ENCODE measurements at regions of chr3 and their contacts with region 1.

Region 1: GRCh38 chr3:81760924-81761903 is at the start of gene GBE1:
- DNase-seq: peak; percentile 98
- total RNA-seq, gene GBE1: 102 TPM

Region 2: DNA sequence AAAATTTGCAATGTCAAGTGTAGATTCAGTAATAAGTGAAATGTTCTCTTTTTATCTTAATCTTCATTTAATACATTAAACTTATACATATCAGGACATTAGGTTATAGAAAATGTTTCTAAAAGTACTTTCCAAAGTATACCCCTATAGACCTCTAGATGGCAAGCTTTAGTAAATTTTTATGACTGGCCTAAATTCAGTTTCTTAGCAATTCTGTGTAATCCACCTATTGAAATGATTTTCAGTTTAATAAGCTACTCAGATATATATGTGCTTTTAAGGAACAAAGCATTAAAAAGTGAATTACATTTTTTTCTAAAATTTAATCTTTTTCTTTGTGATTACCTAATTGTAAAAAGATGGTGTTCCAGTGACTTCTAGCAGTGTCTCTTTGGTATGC is 342.0 kb before region 1 on chr3:
- intact Hi-C with region 1: loop called (anchors 10 kb)
- DNase-seq: no peak

Region 3: GRCh38 chr3:81666493-81667121 is 94.6 kb before region 1 on chr3:
- intact Hi-C with region 1: loop called (anchors 5 kb)
- DNase-seq: no peak

Region 4: DNA sequence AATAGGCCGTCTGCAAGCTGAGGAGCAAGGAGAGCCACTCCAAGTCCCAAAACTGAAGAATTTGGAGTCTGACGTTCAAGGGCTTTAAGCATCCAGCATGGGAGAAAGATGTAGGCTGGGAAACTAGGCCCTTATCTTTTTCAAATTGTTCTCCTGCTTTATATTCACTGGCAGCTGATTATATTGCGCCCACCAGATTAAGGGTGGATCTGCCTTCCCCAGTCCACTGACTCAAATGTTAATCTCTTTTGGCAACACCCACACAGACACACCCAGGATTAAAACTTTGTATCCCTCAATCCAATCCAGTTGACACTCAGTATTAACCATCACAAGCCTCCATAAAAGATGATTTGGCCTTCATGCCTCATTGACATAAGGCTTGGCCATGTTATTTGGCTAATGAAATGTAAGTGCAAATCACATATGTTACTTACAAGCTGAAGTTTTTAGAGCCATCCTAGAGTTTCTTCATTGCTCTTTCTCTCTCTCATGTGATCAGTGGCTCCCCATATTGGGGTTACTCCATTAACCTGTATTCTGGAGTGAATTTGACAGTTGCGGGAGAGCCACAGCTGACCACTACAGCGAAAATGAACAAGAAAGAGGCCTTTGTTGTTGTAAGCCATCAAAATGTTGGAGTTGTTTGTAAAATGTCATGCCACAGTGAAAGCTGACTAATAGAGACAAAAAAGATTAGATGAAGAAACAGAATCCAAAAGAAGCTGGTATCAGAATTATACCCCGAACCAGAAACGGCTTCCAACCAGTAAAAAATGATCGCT is 61.5 kb before region 1 on chr3:
- intact Hi-C with region 1: no loop called
- DNase-seq: no peak

Region 5: GRCh38 chr3:81716870-81717509 is 44.2 kb before region 1 on chr3:
- intact Hi-C with region 1: loop called (anchors 2 kb)
- DNase-seq: no peak

Region 6: GRCh38 chr3:81743096-81744025 is 17.9 kb before region 1 on chr3:
- intact Hi-C with region 1: loop called (anchors 2 kb)
- DNase-seq: no peak

Region 7: DNA sequence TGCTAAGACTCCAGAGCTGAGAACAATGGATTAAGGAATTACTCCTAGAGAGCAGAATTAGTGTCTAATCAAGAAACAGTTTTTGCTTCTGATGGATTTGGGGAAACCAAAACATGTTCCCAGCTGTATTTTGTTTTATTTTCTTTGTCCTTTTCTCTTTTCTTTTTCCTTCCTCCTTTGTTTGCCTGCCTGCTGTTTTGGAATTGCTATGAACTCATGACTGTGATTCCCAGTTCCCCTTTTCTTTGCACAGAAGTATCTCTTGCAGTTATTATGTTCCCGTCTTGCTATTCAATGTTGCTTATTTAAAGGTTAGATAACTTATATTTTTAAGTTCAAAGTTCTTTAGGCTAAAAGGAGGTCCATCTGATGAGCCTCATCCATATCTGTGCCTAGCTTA is 77.2 kb after region 1 on chr3:
- intact Hi-C with region 1: loop called (anchors 5 kb)
- DNase-seq: no peak

Region 8: GRCh38 chr3:82133070-82133606 is 371.9 kb after region 1 on chr3:
- intact Hi-C with region 1: loop called (anchors 10 kb)
- DNase-seq: peak; percentile 77